Natural killer cell (primary cell): ENCODE measurements at regions of chr15 and their contacts with region 1.

Region 1: DNA sequence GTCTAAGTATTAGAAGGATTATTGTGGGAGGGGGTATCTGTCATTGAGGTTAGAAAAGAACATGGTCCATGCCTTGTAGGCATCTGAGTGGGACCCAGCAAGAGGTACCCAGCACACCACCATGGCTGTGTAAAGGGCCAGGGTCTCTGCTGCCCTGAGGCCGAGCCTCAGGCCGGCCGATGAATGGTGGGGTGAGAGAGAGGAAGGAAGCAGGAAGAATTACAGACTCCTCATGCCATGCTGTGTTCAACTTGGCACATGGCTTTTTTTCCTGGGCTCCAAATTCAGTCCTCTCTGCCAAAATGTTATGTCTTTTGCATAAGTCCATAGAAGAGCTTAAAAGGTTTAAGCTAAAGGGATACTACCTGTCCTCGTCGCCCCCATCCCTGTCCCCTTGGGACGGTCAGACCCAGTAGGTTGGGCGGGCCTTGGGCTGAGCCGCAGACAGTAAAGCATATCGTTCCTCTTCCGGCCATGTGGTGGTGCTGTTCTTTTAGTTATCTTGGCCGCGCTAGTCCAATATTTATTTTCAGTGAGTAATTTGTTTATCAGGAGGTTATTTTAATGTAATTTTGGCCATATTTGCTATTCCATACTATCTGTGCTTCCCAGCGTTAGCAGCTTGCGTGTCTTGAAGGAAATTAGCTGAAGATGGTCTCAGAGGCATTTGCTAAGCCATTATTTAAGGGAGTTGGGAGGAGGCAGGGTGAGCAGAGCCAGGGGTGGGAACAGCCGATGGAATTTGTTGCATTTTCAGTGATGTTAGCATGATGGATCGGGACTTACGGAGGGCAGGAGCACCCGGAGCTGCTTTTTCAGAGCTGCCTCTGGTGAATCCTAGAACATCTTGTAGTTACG is 152.4 kb downstream of the AGBL1 start:
- DNase-seq: peak in 1 of 2 donors; percentile 70
- ATAC-seq: peak in 1 of 3 donors; percentile 71
- H3K4me3 ChIP-seq: no peak overlapping the region
- H3K4me3 Mint-ChIP-seq: no peak overlapping the region
- H3K27ac ChIP-seq: no peak overlapping the region
- H3K27ac Mint-ChIP-seq: no peak overlapping the region
- H3K4me1 ChIP-seq: no peaks in the 10 kb centered on the region
- H3K4me1 Mint-ChIP-seq: peaks cover 5 to 12% of the 10 kb centered on the region in 2 donors
- H3K27me3 ChIP-seq: peaks cover 3% of the 10 kb centered on the region
- H3K27me3 Mint-ChIP-seq: peaks cover 16 to 41% of the 10 kb centered on the region in 2 donors
- CTCF ChIP-seq: peak; percentile 51

Region 2: GRCh38 chr15:87604857-87605446 is 1372.9 kb after region 1 on chr15:
- intact Hi-C with region 1: loop called (anchors 5 kb)
- DNase-seq: peak in 1 of 2 donors; percentile 30
- ATAC-seq: no peak
- H3K4me3 ChIP-seq: no peak overlapping the region
- H3K4me3 Mint-ChIP-seq: no peak overlapping the region
- H3K27ac ChIP-seq: no peak overlapping the region
- H3K27ac Mint-ChIP-seq: no peak overlapping the region
- H3K4me1 ChIP-seq: no peaks in the 10 kb centered on the region
- H3K4me1 Mint-ChIP-seq: no peaks in the 10 kb centered on the region
- H3K27me3 ChIP-seq: no peaks in the 10 kb centered on the region
- H3K27me3 Mint-ChIP-seq: peaks cover 0 to 10% of the 10 kb centered on the region in 2 donors
- CTCF ChIP-seq: peak; percentile 42